Activated T-helper 1 cell treated with anti-CD3 and anti-CD28 coated beads, Interleukin-12 subunit alpha, Interleukin-12 subunit beta, Interleukin-2, Interleukin-4 antibody, amounts not matched to agents 30 ng/mL and 10 ng/mL and 1 ng/mL, durations not matched to agents 14 hours and 24 hours and 36 hours (primary cell): ENCODE measurements at regions of chr6 and their contacts with region 1.

Region 1: GRCh38 chr6:126339796-126340609 is at the start of gene CENPW:
- DNase-seq: peak; percentile 92
- H3K4me3 Mint-ChIP-seq: no peak within 1 kb of the TSS
- H3K27ac Mint-ChIP-seq: no peak within 1 kb of the TSS
- H3K4me1 Mint-ChIP-seq: peaks cover 27% of the 10 kb centered on the region
- H3K27me3 Mint-ChIP-seq: no peaks in the 10 kb centered on the region
- total RNA-seq, gene CENPW: 43.4 and 44.2 TPM in 2 replicates

Region 2: DNA sequence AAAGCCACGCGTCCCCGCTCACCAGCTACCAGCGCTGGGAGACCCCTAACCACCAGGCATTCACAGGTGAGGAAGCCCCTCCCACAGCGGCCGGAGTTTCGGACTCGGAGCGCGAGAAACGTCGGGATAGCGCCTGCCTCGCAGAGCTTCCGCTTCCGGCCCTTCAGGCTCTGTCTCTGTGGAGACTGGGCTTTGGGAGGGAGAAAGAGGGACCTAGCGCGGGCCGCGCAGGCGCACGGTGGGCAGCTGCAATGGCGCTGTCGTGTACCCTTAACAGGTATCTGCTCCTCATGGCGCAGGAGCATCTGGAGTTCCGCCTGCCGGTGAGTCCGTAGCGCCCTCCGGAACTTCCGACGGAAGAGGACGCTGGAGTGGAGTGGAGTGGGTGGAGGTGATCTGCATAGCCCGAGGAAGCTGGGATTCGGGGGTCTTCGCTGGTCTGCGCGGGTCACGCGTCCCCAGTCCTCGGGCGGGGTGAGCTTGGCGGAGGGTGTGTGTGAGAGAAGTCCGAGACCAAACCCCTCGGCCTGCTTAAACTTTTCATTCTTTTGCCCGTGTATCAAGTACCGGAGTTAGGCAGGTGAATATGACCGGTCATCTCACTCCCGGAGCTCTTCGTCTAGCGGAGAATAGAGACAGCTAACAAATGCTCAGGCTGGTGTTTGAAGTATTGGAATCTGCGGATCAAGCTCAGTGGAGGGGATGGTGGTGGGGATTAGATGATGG is 353.5 kb before region 1 on chr6 and contains the start of gene TRMT11:
- intact Hi-C with region 1: loop called (anchors 2 kb)
- DNase-seq: peak; percentile 72
- H3K4me3 Mint-ChIP-seq: no peak within 1 kb of the TSS
- H3K27ac Mint-ChIP-seq: no peak within 1 kb of the TSS
- H3K4me1 Mint-ChIP-seq: peaks cover 8% of the 10 kb centered on the region
- H3K27me3 Mint-ChIP-seq: no peaks in the 10 kb centered on the region
- total RNA-seq, gene TRMT11: 27.9 and 29.1 TPM in 2 replicates

Region 3: GRCh38 chr6:126054258-126054702 is 285.7 kb before region 1 on chr6:
- intact Hi-C with region 1: no loop called
- DNase-seq: no peak
- H3K4me3 Mint-ChIP-seq: no peak overlapping the region
- H3K27ac Mint-ChIP-seq: no peak overlapping the region
- H3K4me1 Mint-ChIP-seq: no peaks in the 10 kb centered on the region
- H3K27me3 Mint-ChIP-seq: no peaks in the 10 kb centered on the region

Region 4: DNA sequence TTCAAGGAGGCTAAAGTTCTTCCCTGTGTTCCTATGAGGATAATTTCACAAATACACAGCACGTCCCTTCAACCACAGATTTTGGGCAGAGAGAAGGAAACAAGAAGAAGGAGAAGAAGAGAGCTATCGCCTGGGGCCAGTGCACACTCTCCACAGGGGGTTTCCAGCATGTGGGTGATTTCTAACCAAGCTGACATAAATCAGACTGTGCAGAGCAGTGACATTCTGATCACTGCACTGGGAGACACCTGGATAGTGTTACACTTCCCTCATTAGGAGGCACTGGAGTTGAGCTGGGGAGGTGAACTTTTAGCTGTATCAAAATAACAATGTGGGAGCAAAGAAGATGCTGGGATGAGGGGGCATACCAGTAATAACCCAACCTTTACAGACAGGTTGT is 71.9 kb before region 1 on chr6:
- intact Hi-C with region 1: no loop called
- DNase-seq: no peak
- H3K4me3 Mint-ChIP-seq: no peak overlapping the region
- H3K27ac Mint-ChIP-seq: no peak overlapping the region
- H3K4me1 Mint-ChIP-seq: no peaks in the 10 kb centered on the region
- H3K27me3 Mint-ChIP-seq: no peaks in the 10 kb centered on the region

Region 5: DNA sequence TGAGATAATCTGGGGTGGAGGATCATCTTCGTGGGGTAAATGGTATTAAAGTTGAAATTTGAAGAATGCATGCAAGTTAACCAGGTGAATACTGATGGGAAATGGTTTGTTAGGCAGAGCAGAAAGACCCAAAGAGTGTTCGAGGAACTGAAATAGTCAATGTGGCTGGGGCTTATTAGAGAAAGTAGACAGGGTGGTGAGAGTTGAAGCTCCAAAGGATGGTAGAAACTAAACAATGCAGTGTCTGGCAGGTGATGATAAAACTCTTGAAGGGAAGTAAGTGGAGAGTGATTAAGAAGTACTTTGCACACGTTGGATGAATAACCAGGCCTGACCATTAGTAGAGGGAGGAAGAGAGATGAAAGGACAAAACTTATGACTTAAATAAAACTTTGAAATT is 39.9 kb before region 1 on chr6:
- intact Hi-C with region 1: no loop called
- DNase-seq: no peak
- H3K4me3 Mint-ChIP-seq: no peak overlapping the region
- H3K27ac Mint-ChIP-seq: no peak overlapping the region
- H3K4me1 Mint-ChIP-seq: peaks cover 20% of the 10 kb centered on the region
- H3K27me3 Mint-ChIP-seq: peaks cover 5% of the 10 kb centered on the region